IMR-90 (cell line): ENCODE measurements at regions of chr11 and their contacts with region 1.

Region 1: GRCh38 chr11:65506770-65507505 is 8.1 kb downstream of the MALAT1 start:
- DNase-seq: peak; percentile 95
- ATAC-seq: no peak; the same call in 1 of the 2 replicates
- H3K4me3 ChIP-seq: peak overlapping the region; percentile 72
- H3K27ac ChIP-seq: peak overlapping the region; percentile 16
- H3K4me1 ChIP-seq: no peaks in the 10 kb centered on the region
- H3K27me3 ChIP-seq: no peaks in the 10 kb centered on the region
- CTCF ChIP-seq: no peak
- POLR2A ChIP-seq: no peak
- RAD21 ChIP-seq: no peak

Region 2: DNA sequence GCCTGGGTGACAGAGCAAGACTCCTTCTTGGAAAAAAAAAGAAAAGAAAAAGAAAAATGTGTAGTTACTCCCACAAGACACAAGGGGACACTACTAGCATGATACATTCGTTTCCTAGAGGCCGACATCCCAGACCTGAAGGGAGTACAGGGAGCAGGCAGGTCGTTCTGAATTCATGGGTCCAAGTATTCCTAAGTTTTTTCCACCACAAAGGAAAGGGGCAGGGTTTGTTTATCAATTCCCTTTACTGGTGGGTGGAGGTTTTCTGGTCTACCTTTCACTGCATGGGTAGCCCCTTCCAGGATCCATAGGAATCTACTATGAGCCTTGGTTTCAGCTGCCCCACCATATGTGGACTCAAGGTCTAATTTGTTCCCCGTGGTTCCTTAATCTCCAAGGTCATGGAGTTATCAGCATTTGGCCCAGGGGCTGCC is 140.6 kb before region 1 on chr11:
- CTCF ChIA-PET with region 1: interaction called, 5 read pairs
- POLR2A ChIA-PET with region 1: interaction called, 5 read pairs
- dilution Hi-C with region 1: no loop called
- in situ Hi-C with region 1: loop called (anchors 5 kb)
- intact Hi-C with region 1: loop called (anchors 1 kb)
- DNase-seq: peak; percentile 86
- ATAC-seq: peak; percentile 94
- H3K4me3 ChIP-seq: no peak overlapping the region
- H3K27ac ChIP-seq: no peak overlapping the region
- H3K4me1 ChIP-seq: peaks cover 2% of the 10 kb centered on the region
- H3K27me3 ChIP-seq: no peaks in the 10 kb centered on the region
- CTCF ChIP-seq: peak; percentile 85
- POLR2A ChIP-seq: peak; percentile 38; the same call in 1 of the 2 replicates
- RAD21 ChIP-seq: peak; percentile 88

Region 3: GRCh38 chr11:65390099-65390941 is 116.6 kb before region 1 on chr11:
- CTCF ChIA-PET with region 1: no interaction called
- POLR2A ChIA-PET with region 1: interaction called, 18 read pairs
- dilution Hi-C with region 1: no loop called
- in situ Hi-C with region 1: no loop called
- intact Hi-C with region 1: no loop called
- DNase-seq: no peak
- ATAC-seq: peak; percentile 28
- H3K4me3 ChIP-seq: no peak overlapping the region
- H3K27ac ChIP-seq: peak overlapping the region; percentile 73
- H3K4me1 ChIP-seq: peaks cover 27% of the 10 kb centered on the region
- H3K27me3 ChIP-seq: no peaks in the 10 kb centered on the region
- CTCF ChIP-seq: no peak
- POLR2A ChIP-seq: no peak
- RAD21 ChIP-seq: no peak

Region 4: DNA sequence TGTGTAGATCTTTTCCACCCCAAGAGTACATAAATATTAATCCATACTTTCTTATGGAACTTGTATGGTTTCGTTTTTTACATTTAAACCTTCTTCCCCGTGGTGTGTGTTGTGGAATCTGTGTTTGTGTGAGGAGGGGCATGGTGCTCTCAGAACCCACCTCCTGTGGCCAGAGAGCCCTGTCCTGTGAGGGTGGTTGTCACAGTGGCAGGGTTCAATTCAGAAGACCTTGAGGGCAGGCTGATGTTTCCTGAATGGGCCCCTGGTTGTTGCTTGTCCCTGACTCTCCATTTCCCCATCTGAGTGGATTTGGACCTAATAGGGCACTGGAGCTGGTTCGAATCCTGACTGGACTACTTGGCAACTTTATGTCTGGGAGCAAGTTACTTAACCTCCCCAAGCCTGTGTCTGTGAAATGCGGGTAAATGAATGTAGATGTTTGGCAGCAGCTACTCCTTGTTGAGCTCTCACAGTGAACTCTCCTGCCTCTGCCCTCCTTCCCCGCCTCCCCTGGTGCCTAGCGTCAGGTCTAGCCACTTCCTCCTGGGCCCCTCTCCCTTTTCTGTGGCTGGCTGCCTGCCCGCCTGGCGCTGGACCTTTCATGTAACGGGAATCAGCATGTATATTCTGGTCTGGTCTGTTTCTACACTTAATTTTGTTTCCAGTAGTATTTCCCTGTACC is 77.1 kb before region 1 on chr11:
- CTCF ChIA-PET with region 1: no interaction called
- POLR2A ChIA-PET with region 1: interaction called, 125 read pairs
- dilution Hi-C with region 1: no loop called
- in situ Hi-C with region 1: no loop called
- intact Hi-C with region 1: loop called (anchors 5 kb)
- DNase-seq: peak; percentile 80
- ATAC-seq: peak; percentile 1
- H3K4me3 ChIP-seq: peak overlapping the region; percentile 35
- H3K27ac ChIP-seq: peak overlapping the region; percentile 12
- H3K4me1 ChIP-seq: peaks cover 2% of the 10 kb centered on the region; the same call in 1 of the 2 replicates
- H3K27me3 ChIP-seq: no peaks in the 10 kb centered on the region
- CTCF ChIP-seq: no peak
- POLR2A ChIP-seq: peak; percentile 80
- RAD21 ChIP-seq: no peak

Region 5: DNA sequence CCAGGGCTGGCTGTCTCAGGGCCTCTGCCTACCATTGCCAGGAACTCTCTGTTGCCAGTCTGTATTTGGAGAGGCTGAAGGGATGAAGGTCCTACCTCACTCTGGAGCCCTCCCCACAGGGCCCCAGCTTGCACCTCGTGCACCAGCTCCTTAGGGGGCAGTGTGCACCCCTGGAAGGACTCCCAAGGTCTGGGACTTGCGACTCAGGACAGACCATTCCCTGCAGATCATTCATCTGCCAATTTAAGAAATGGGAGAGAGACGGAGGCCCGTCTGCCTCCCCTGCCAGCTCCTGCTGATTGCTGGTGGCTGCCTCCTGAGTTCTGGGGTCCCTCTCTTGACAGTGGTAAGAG is 35.6 kb before region 1 on chr11:
- CTCF ChIA-PET with region 1: interaction called, 9 read pairs
- POLR2A ChIA-PET with region 1: interaction called, 494 read pairs
- dilution Hi-C with region 1: no loop called
- in situ Hi-C with region 1: loop called (anchors 5 kb)
- intact Hi-C with region 1: loop called (anchors 5 kb)
- DNase-seq: peak; percentile 79
- ATAC-seq: peak; percentile 68
- H3K4me3 ChIP-seq: peak overlapping the region; percentile 13; the same call in 1 of the 2 replicates
- H3K27ac ChIP-seq: peak overlapping the region; percentile 69
- H3K4me1 ChIP-seq: peaks cover 10% of the 10 kb centered on the region
- H3K27me3 ChIP-seq: no peaks in the 10 kb centered on the region
- CTCF ChIP-seq: peak; percentile 65
- POLR2A ChIP-seq: peak; percentile 60; the same call in 1 of the 2 replicates
- RAD21 ChIP-seq: peak; percentile 68

Region 6: GRCh38 chr11:65540297-65541092 is 33.6 kb after region 1 on chr11:
- CTCF ChIA-PET with region 1: no interaction called
- POLR2A ChIA-PET with region 1: no interaction called
- dilution Hi-C with region 1: no loop called
- in situ Hi-C with region 1: no loop called
- intact Hi-C with region 1: no loop called
- DNase-seq: peak; percentile 82
- ATAC-seq: peak; percentile 94
- H3K4me3 ChIP-seq: peak overlapping the region; percentile 59
- H3K27ac ChIP-seq: peak overlapping the region; percentile 73
- H3K4me1 ChIP-seq: peaks cover 5% of the 10 kb centered on the region; the same call in 1 of the 2 replicates
- H3K27me3 ChIP-seq: no peaks in the 10 kb centered on the region
- CTCF ChIP-seq: peak; percentile 88
- POLR2A ChIP-seq: no peak
- RAD21 ChIP-seq: peak; percentile 77